Right lobe of liver (tissue), 6 donors: ENCODE measurements at regions of chr5 and their contacts with region 1.

Region 1: DNA sequence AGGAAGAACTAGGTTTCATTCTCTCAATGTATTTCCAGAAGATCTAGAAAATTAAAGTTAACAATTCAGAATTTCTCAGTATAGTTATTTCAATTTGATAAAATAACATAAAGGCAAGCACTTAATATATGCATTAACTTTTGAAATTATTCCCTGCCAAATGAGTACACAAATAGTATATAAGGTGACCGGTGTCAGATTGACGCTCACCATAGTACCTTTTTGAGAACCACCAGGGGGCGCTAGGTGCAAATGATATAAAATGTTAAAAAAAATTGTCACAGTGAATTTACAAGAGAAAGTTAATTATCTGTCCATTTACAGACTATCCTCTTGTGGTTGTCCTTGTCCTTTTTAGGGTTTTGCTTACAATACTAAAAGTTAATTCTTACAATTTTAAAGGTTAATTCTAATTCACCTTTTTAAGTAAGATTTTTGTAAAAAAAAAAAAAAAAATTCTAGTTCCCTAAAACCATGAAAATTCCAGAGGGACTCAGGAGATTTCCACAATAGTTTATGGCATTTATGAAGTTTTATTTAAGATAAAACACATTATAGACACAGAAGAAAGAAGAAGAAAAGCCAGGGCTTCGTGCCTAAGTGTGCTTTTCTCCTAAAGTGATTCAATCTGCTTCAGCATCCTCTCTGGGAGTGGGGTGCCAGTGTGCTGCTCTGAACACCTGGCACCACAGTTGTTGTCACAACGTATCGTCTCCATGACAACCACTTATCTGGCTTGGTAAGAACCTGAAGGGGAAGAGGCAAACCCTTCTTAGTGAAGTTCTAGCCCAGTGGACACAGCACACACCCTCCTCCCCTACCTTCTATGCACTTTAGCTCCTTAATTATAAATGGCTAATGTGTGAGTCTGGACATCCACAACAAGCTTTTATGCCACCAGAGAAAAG is 1.7 kb downstream of the ADAMTS16 start:
- DNase-seq: no peak
- ATAC-seq: peak; percentile 54 to 76 (median 74)
- H3K4me3 ChIP-seq: no peak overlapping the region
- H3K27ac ChIP-seq: no peak overlapping the region
- H3K4me1 ChIP-seq: peaks cover 0 to 22% (median 2%) of the 10 kb centered on the region in 4 donors
- H3K27me3 ChIP-seq: peaks cover 0 to 5% of the 10 kb centered on the region in 2 donors
- CTCF ChIP-seq: peak; percentile 79 to 87 (median 81)
- POLR2A ChIP-seq: no peak

Region 2: GRCh38 chr5:5306696-5307095 is 164.8 kb after region 1 on chr5:
- intact Hi-C with region 1: no loop called
- DNase-seq: no peak
- ATAC-seq: no peak
- H3K4me3 ChIP-seq: no peak overlapping the region
- H3K27ac ChIP-seq: no peak overlapping the region
- H3K4me1 ChIP-seq: no peaks in the 10 kb centered on the region
- H3K27me3 ChIP-seq: no peaks in the 10 kb centered on the region
- CTCF ChIP-seq: no peak
- POLR2A ChIP-seq: no peak

Region 3: DNA sequence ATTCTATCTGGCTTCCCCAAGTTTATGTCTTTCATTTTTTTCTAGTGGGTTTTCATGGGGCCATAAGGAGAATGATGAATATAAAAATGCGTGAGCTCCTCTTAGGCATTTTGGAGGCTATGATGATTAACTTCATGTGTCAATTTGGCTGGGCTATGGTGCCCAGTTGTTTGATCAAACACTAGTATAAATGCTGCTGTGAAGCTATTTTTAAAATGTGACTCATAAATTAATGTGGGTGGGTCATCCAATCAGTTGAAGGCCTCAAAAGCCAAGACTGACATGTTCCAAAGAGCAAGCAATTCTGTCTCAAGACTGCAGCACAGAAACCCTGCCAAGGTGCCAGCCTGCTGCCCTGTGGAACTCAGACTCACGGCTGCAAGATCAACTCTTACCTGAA is 256.2 kb after region 1 on chr5:
- intact Hi-C with region 1: loop called (anchors 5 to 10 kb)
- DNase-seq: no peak
- ATAC-seq: no peak
- H3K4me3 ChIP-seq: no peak overlapping the region
- H3K27ac ChIP-seq: no peak overlapping the region
- H3K4me1 ChIP-seq: no peaks in the 10 kb centered on the region
- H3K27me3 ChIP-seq: no peaks in the 10 kb centered on the region
- CTCF ChIP-seq: no peak
- POLR2A ChIP-seq: no peak